ENCODE measurements at regions of chr17 and their contacts with region 1.

Region 1: GRCh38 chr17:67322042-67322787 is 44.2 kb downstream of the PSMD12 start:
- DNase-seq: no peak
- H3K4me3 ChIP-seq: no peak overlapping the region
- CTCF ChIP-seq: no peak

Region 2: GRCh38 chr17:66727639-66728570 is 594.3 kb before region 1 on chr17:
- in situ Hi-C with region 1: loop called (anchors 25 kb)
- DNase-seq: peak; percentile 48
- H3K4me3 ChIP-seq: no peak overlapping the region
- CTCF ChIP-seq: peak; percentile 89

Region 3: GRCh38 chr17:67376737-67377487 is 54.7 kb after region 1 on chr17 and contains the start of gene PITPNC1:
- in situ Hi-C with region 1: no loop called
- DNase-seq: peak; percentile 65
- H3K4me3 ChIP-seq: peak within 1 kb of the TSS; percentile 90
- CTCF ChIP-seq: no peak

Measured in astrocyte of the cerebellum (primary cell).